PC-3 (cell line): ENCODE measurements at regions of chr5 and their contacts with region 1.

Region 1: GRCh38 chr5:157504053-157504452 is 44.0 kb downstream of the NIPAL4 start:
- DNase-seq: no peak
- ATAC-seq: no peak
- H3K4me3 ChIP-seq: no peak overlapping the region
- H3K27ac ChIP-seq: no peak overlapping the region
- H3K4me1 ChIP-seq: peaks cover 14% of the 10 kb centered on the region
- H3K27me3 ChIP-seq: no peaks in the 10 kb centered on the region
- CTCF ChIP-seq: no peak

Region 2: GRCh38 chr5:157253547-157253946 is 250.5 kb before region 1 on chr5:
- CTCF ChIA-PET with region 1: no interaction called
- POLR2A ChIA-PET with region 1: no interaction called
- intact Hi-C with region 1: no loop called
- DNase-seq: peak; percentile 93
- ATAC-seq: peak; percentile 91
- H3K4me3 ChIP-seq: no peak overlapping the region
- H3K27ac ChIP-seq: no peak overlapping the region
- H3K4me1 ChIP-seq: no peaks in the 10 kb centered on the region
- H3K27me3 ChIP-seq: peaks cover 23% of the 10 kb centered on the region
- CTCF ChIP-seq: peak; percentile 99

Region 3: GRCh38 chr5:157582731-157583620 is 78.9 kb after region 1 on chr5:
- CTCF ChIA-PET with region 1: no interaction called
- POLR2A ChIA-PET with region 1: interaction called, 15 read pairs
- intact Hi-C with region 1: no loop called
- DNase-seq: no peak
- ATAC-seq: peak; percentile 66
- H3K4me3 ChIP-seq: no peak overlapping the region
- H3K27ac ChIP-seq: no peak overlapping the region
- H3K4me1 ChIP-seq: peaks cover 17% of the 10 kb centered on the region; the same call in 1 of the 2 replicates
- H3K27me3 ChIP-seq: no peaks in the 10 kb centered on the region
- CTCF ChIP-seq: peak; percentile 46; the same call in 1 of the 2 replicates